Colonic mucosa (tissue), 4 donors: ENCODE measurements at regions of chr4 and their contacts with region 1.

Region 1: DNA sequence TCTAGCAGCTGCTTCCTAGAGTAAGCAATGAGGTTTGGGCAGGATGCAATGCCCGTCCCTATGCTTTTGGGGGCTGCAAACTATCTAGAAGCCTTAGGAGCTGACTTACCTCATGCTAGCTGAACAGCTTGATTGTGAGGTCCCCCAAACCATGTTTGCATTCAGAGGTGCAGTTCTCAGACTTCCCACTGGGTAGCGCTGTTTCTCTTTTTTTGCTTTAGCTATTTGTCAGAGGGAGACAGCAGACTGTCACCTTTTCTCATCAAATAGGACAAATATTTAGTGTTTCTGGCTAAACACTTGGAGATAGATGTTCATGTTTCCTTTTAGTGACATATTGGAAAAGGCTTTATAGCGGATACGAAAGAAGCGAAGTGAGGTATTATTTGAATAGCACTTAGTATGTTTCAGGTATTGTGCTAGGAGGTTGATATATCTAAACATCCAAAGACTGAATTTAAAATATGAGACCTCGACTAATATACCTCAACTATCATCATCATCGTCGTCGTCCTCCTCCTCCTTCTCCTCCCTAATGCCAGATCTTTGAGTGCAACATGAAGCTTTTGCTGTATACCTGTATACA is 18.7 kb upstream of the TMEM192 start:
- DNase-seq: peak; percentile 73
- H3K4me3 ChIP-seq: no peak overlapping the region
- H3K27ac ChIP-seq: no peak overlapping the region
- H3K4me1 ChIP-seq: no peaks in the 10 kb centered on the region
- H3K27me3 ChIP-seq: no peaks in the 10 kb centered on the region
- CTCF ChIP-seq: peak; percentile 94

Region 2: DNA sequence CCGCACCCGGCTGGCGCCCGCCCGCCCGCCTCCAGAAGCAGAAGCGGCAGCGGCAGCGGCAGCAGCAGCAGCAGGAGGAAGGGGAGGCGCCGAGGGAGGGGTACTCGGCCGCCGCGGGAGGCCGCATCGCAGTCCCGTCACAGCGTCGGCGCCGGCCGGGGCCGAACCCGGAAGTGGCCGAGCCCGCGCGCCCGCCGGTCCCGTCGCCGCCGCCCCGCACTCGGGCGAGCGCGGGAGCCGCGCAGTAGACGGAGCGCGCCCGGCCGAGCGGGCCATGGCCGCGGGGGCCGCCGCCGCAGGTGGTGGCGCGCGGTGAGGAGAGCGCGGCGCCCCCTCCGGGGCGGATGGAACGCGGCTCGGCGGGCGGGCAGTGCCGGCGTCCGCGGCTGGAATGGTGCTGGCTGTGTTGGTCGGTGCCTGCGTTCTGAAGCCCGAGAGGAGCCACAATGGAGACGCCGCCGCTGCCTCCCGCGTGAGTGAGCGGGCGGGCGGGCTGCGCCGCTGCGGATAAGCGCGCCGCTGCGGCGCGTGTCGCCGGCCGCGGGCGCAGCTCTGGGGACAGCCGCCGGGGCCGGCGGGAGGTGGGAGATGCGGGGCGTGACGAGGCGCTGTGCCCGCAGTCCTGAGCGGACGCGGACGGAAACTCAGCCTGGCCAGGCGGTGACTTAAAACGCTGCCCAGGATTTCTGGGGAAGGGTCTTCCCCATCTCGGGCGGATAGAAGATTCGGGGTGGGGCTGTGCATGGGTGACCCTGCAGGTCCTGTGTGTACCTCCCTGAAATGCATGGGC is 76.3 kb after region 1 on chr4 and contains the start of gene KLHL2:
- intact Hi-C with region 1: no loop called
- DNase-seq: peak; percentile 69
- H3K4me3 ChIP-seq: peak within 1 kb of the TSS; percentile 63
- H3K27ac ChIP-seq: peak within 1 kb of the TSS; percentile 77
- H3K4me1 ChIP-seq: no peaks in the 10 kb centered on the region
- H3K27me3 ChIP-seq: no peaks in the 10 kb centered on the region
- CTCF ChIP-seq: no peak
- total RNA-seq, gene KLHL2: 8.6 to 11.1 TPM

Region 3: DNA sequence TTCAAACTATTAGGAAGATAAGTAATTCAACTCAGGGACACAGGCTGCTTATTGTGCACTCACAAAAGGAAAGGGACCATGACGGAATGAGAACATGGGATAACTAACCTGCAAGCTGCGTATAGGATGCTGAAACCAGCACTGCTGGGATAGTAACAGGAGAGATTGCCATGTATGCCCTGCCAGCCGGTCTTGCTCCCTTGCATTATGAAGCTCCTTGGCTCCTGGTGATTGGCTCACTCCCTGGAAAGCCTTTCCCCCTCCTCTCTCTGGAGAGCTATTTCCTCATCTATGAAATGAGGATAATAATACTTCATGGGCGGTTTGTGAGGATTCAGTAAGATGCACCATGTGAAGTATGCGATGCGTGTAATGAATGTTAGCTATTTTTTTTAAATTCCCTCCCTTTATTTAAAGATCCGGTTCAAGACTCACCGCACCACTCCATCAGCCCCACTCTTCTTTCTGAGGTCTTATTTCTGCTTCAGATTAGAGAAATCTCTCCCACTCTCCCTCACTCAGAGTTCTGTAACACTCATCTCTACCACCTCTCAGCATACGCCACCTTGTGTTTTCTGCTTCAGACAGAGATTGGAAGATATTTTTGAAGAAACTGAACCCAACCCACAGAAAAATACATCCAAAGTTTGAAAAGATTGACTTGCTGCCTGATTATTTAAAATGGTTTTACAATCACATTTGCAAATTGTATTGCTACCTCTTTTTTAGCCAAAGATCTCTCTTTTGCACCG is 214.5 kb after region 1 on chr4:
- intact Hi-C with region 1: loop called (anchors 5 kb)
- DNase-seq: no peak
- H3K4me3 ChIP-seq: no peak overlapping the region
- H3K27ac ChIP-seq: no peak overlapping the region
- H3K4me1 ChIP-seq: no peaks in the 10 kb centered on the region
- H3K27me3 ChIP-seq: no peaks in the 10 kb centered on the region
- CTCF ChIP-seq: no peak

Region 4: DNA sequence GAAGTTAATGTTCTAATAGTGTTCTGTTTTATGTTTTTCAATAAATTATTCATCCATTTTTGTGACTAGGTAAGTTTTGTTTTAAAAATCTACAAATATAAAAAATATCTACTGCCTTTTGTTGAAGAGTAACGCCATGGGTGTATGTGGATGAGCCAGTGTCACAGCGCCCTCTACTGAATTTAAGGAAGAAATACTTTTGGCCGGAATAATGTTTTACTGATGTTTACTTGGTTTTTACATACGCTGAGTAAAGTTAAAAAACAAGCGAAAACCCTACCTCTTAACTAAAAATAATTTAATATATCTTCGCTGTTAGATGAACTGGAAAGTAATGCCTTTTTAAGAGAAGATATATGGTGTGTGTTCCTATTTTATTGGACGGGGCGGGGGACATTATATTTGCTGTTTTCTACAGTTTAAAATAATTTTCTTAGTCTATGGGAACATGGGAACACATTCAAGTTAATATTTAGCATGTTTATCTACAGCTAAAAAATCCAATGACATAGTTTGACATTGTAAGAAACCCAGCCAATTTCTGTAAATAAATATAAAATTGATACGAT is 333.6 kb after region 1 on chr4:
- intact Hi-C with region 1: loop called (anchors 2 kb)
- DNase-seq: no peak
- H3K4me3 ChIP-seq: no peak overlapping the region
- H3K27ac ChIP-seq: no peak overlapping the region
- H3K4me1 ChIP-seq: no peaks in the 10 kb centered on the region
- H3K27me3 ChIP-seq: peaks cover 4% of the 10 kb centered on the region
- CTCF ChIP-seq: peak; percentile 72